Activated B cell treated with CpG ODN at 0.5 μM for 24 hours (primary cell): ENCODE measurements at regions of chrX and their contacts with region 1.

Region 1: GRCh38 chrX:46903458-46904242 is 8.6 kb upstream of the JADE3 start:
- DNase-seq: peak; percentile 54
- ATAC-seq: peak; percentile 99
- H3K4me3 Mint-ChIP-seq: peak overlapping the region; percentile 73
- H3K27ac Mint-ChIP-seq: peak overlapping the region; percentile 35
- H3K4me1 Mint-ChIP-seq: peaks cover 5% of the 10 kb centered on the region
- H3K27me3 Mint-ChIP-seq: no peaks in the 10 kb centered on the region
- CTCF ChIP-seq: no peak

Region 2: DNA sequence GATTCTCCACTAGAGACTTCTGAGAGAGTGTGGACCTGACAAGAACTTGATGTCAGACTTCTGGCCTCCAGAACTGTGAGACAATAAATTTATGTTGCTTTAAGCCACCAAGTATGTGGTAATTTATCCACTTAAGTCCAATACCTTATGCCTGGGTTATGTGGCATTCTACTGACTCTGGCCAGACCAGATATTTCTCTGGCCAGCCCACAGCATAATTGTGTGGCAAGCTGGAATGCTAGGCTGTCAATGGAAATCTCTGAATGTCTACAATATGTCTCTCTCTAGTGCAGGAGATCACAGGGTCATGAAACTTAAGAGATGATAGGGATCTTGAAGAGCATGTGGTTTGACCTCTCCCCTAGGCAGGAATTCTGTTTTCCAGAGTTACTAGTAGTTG is 609.4 kb before region 1 on chrX:
- CTCF ChIA-PET with region 1: no interaction called
- POLR2A ChIA-PET with region 1: no interaction called
- intact Hi-C with region 1: no loop called
- DNase-seq: no peak
- ATAC-seq: no peak
- H3K4me3 Mint-ChIP-seq: no peak overlapping the region
- H3K27ac Mint-ChIP-seq: no peak overlapping the region
- H3K4me1 Mint-ChIP-seq: no peaks in the 10 kb centered on the region
- H3K27me3 Mint-ChIP-seq: peaks cover 12% of the 10 kb centered on the region
- CTCF ChIP-seq: no peak

Region 3: DNA sequence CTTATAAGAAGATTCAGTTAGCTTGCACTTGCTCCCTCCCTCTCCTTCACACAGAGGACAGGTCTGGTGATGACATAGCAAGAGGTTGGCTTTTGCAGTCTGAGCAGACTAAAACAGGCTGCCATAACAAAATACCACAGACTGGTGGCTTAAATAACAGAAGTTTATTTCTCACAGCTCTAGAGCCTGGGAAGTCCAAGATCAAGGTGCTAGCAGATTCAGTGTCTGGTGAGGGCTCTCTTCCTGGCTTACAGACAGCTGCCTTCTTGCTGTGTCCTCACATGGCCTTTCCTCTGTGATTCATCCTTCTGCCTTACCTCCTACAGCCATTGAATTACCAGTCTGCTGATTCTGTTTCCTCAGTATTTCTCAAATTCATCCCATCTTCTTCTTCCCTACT is 53.7 kb before region 1 on chrX:
- CTCF ChIA-PET with region 1: no interaction called
- POLR2A ChIA-PET with region 1: no interaction called
- intact Hi-C with region 1: no loop called
- DNase-seq: no peak
- ATAC-seq: no peak
- H3K4me3 Mint-ChIP-seq: no peak overlapping the region
- H3K27ac Mint-ChIP-seq: no peak overlapping the region
- H3K4me1 Mint-ChIP-seq: peaks cover 17% of the 10 kb centered on the region
- H3K27me3 Mint-ChIP-seq: no peaks in the 10 kb centered on the region
- CTCF ChIP-seq: no peak

Region 4: GRCh38 chrX:46978341-46979291 is 75.0 kb after region 1 on chrX:
- CTCF ChIA-PET with region 1: interaction called, 18 read pairs
- POLR2A ChIA-PET with region 1: interaction called, 3 read pairs
- intact Hi-C with region 1: loop called (anchors 1 kb)
- DNase-seq: peak; percentile 54
- ATAC-seq: peak; percentile 86
- H3K4me3 Mint-ChIP-seq: no peak overlapping the region
- H3K27ac Mint-ChIP-seq: peak overlapping the region; percentile 1
- H3K4me1 Mint-ChIP-seq: peaks cover 37% of the 10 kb centered on the region
- H3K27me3 Mint-ChIP-seq: no peaks in the 10 kb centered on the region
- CTCF ChIP-seq: no peak

Region 5: DNA sequence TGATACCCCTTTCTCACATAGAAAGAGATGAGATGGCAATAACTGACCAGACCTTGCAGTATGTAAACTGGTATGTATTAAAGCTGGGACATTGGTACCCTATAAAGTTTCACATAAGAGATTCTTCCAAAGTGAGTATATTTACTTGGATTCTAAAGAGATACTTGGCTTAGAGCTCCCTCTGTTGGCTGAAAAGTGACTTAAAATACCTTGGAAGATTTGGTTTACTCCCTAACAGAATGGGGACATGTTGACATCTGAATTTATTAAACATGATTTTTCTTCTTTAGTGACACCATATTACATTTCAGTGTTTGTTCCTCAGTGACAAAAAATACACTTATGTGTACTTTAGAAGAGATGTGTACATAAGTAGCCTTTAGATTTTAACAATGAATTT is 126.7 kb after region 1 on chrX:
- CTCF ChIA-PET with region 1: interaction called, 16 read pairs
- POLR2A ChIA-PET with region 1: no interaction called
- intact Hi-C with region 1: loop called (anchors 1 kb)
- DNase-seq: no peak
- ATAC-seq: no peak
- H3K4me3 Mint-ChIP-seq: no peak overlapping the region
- H3K27ac Mint-ChIP-seq: no peak overlapping the region
- H3K4me1 Mint-ChIP-seq: peaks cover 6% of the 10 kb centered on the region
- H3K27me3 Mint-ChIP-seq: no peaks in the 10 kb centered on the region
- CTCF ChIP-seq: no peak

Region 6: DNA sequence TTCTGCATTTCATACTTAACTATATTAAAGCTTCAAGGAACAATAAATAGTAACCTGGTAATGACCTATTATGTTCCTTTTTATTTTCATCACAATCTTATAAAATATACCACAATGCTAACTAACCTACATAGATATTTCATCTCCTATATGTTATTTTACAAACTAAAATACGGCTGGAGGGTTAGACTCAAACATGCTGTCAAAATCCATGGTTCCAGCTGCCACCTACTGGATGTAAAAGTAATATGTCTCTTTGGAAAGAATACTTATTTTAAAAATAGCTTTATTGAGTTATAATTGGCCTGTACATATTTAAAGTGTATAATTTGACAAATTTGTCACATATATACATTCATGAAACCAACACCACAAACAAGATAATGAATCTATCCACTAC is 189.6 kb after region 1 on chrX:
- CTCF ChIA-PET with region 1: interaction called, 11 read pairs
- POLR2A ChIA-PET with region 1: no interaction called
- intact Hi-C with region 1: loop called (anchors 1 kb)
- DNase-seq: no peak
- ATAC-seq: no peak
- H3K4me3 Mint-ChIP-seq: no peak overlapping the region
- H3K27ac Mint-ChIP-seq: no peak overlapping the region
- H3K4me1 Mint-ChIP-seq: no peaks in the 10 kb centered on the region
- H3K27me3 Mint-ChIP-seq: no peaks in the 10 kb centered on the region
- CTCF ChIP-seq: no peak